ENCODE measurements at regions of chr3 and their contacts with region 1.

Region 1: DNA sequence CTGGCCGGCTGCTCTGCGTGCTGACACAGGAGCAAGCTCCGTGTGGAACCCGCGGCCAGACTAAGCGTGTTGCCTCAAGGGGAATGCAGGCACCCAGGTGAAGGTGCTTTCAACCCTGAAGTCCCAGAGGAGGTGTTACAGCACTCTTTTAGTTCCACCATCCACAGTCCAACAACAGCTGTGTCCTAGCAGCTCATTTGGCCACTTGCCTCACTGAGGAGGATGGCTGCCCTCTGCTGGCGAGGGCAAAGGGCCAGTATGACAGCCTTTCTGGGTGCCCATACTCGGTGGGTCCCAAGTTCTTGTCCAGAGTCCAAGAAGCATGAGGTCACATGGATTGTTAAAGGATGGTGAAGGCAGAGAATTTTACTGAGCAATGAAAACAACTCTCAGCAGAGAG is 87.8 kb downstream of the C3orf85 start:
- DNase-seq: peak; percentile 77
- ATAC-seq: peak; percentile 99
- H3K4me3 Mint-ChIP-seq: no peak overlapping the region
- H3K27ac Mint-ChIP-seq: no peak overlapping the region
- H3K4me1 Mint-ChIP-seq: 0 out of 2 replicates have a peak, but pooled peaks cover 4% of the 10 kb centered on the region
- H3K27me3 Mint-ChIP-seq: no peaks in the 10 kb centered on the region
- CTCF ChIP-seq: peak; percentile 30

Region 2: DNA sequence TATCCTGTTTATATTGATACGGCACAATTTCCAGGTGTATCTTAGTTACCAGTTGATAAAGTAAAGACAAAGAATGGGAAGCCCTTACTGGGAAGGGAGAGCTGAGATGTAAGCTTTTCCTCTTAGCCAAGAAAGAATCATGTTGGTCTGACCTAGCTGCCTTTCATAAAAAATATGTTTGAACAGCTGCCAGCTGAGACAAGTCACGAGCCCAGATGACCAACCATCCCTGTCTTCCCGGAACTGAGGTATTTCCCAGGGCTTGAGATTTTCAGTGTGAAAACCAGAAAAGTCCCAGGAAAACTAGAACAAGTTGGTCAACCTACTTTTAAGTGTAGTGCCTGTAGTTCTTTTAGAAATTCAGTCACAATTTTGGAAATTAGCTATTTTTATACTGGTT is 710.4 kb before region 1 on chr3:
- CTCF ChIA-PET with region 1: no interaction called
- POLR2A ChIA-PET with region 1: no interaction called
- DNase-seq: no peak
- ATAC-seq: no peak
- H3K4me3 Mint-ChIP-seq: no peak overlapping the region
- H3K27ac Mint-ChIP-seq: no peak overlapping the region
- H3K4me1 Mint-ChIP-seq: no peaks in the 10 kb centered on the region
- H3K27me3 Mint-ChIP-seq: no peaks in the 10 kb centered on the region
- CTCF ChIP-seq: no peak

Region 3: DNA sequence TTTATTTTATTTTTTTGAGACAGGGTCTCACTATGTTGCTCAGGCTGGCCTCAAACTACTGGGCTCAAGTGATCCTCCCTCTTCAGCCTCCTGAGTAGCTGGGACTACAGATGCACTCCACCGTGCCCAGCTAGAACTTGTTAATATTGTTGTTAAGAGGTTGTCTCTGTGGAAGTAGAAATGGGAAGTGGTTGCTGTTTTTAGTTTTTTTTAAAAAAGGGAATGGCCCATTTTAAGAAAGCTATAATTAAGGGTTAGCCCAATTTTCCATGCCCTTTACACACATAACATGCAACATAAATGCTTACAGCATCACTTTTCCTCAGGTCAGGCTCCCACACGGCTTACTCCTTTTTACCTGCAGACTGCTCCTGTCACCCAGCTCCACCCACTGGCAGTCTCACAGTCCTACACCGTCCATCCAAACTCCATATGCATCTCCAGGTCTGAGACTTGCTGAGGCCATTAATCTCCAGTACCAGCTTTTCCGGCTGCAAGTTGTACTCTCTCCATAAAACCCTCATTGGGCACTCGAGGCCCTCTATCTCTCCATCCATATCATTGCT is 126.2 kb before region 1 on chr3:
- CTCF ChIA-PET with region 1: interaction called, 21 read pairs
- POLR2A ChIA-PET with region 1: no interaction called
- DNase-seq: peak; percentile 57
- ATAC-seq: peak; percentile 99
- H3K4me3 Mint-ChIP-seq: no peak overlapping the region
- H3K27ac Mint-ChIP-seq: no peak overlapping the region
- H3K4me1 Mint-ChIP-seq: peaks cover 3% of the 10 kb centered on the region
- H3K27me3 Mint-ChIP-seq: no peaks in the 10 kb centered on the region
- CTCF ChIP-seq: no peak